ENCODE measurements at regions of chr3 and their contacts with region 1.

Region 1: GRCh38 chr3:190053919-190054672 is 66.6 kb downstream of the P3H2 start:
- DNase-seq: peak; percentile 77
- ATAC-seq: peak; percentile 94
- H3K4me3 ChIP-seq: no peak overlapping the region
- H3K27ac ChIP-seq: no peak overlapping the region
- H3K4me1 ChIP-seq: peaks cover 12% of the 10 kb centered on the region
- H3K27me3 ChIP-seq: no peaks in the 10 kb centered on the region
- CTCF ChIP-seq: no peak

Region 2: DNA sequence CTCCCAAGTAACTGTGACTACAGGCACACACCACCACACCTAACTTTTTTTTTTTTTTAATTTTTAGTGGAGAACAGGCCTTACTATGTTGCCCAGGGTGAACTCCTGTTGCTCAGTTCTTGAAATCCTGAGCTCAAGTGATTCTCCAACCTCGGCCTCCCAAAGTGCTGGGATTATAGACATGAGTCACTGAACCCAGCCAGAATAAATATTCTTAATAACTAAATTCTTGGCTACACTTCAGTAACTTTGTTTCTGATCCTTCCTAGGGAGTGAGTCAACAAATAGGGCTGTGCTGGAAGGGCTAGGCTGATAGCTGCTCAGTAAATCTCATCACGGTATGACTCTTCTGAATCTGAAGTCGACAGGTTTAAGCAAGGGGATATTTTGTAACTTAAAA is 10.0 kb after region 1 on chr3:
- CTCF ChIA-PET with region 1: no interaction called
- POLR2A ChIA-PET with region 1: interaction called, 18 read pairs
- intact Hi-C with region 1: no loop called
- DNase-seq: peak; percentile 96
- ATAC-seq: peak; percentile 99
- H3K4me3 ChIP-seq: no peak overlapping the region
- H3K27ac ChIP-seq: peak overlapping the region; percentile 36
- H3K4me1 ChIP-seq: peaks cover 18% of the 10 kb centered on the region
- H3K27me3 ChIP-seq: no peaks in the 10 kb centered on the region
- CTCF ChIP-seq: no peak

Region 3: GRCh38 chr3:190108804-190109203 is 54.7 kb after region 1 on chr3:
- CTCF ChIA-PET with region 1: no interaction called
- POLR2A ChIA-PET with region 1: interaction called, 13 read pairs
- intact Hi-C with region 1: no loop called
- DNase-seq: no peak
- ATAC-seq: no peak
- H3K4me3 ChIP-seq: no peak overlapping the region
- H3K27ac ChIP-seq: no peak overlapping the region
- H3K4me1 ChIP-seq: no peaks in the 10 kb centered on the region
- H3K27me3 ChIP-seq: no peaks in the 10 kb centered on the region
- CTCF ChIP-seq: no peak

Measured in PC-3 (cell line).